B cell (primary cell): ENCODE measurements at regions of chr11 and their contacts with region 1.

Region 1: DNA sequence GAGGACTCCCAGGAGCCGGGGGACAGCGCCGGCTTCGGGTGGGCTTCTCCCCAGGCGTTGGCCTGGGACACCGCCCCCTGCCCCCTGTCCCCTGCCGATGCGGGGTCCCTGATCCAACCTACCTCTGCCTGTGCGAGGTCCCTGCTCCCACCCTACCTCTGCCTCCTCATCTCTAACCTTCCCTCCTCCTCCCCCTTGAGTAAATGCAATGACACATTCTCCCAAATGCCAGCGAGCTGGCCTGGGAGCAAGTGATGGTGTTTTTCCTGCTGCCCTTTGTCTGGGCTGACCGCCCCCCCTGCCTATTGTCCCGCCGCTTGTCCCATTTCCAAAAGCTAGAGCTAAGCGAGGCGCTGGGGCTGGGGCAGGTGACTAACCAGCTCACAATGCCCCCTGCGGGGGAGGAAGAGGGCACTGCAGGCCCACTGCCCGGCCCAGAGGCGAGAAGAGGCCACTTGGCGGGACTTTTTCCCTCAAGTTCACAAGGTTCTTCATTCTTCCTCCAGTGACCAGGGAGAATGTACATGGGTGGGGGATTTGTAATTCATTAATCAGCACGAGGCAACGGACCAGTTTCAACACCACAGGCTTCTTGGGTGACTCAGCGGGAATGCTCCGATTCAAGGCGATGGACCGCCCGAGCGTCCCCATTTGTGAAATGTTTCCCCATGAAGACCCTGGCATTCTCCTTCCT is 674 bp upstream of the CLCF1 start:
- DNase-seq: peak; percentile 77
- ATAC-seq: peak; percentile 35
- H3K4me3 ChIP-seq: peak overlapping the region in 4 of 5 experiments; percentile 48 to 95 (median 76)
- H3K4me3 Mint-ChIP-seq: peak overlapping the region; percentile 94
- H3K27ac ChIP-seq: peak overlapping the region; percentile 41 to 89
- H3K27ac Mint-ChIP-seq: peak overlapping the region; percentile 92
- H3K4me1 ChIP-seq: peaks cover 40 to 47% of the 10 kb centered on the region in 2 donors
- H3K4me1 Mint-ChIP-seq: peaks cover 50% of the 10 kb centered on the region
- H3K27me3 ChIP-seq: no peaks in the 10 kb centered on the region
- H3K27me3 Mint-ChIP-seq: no peaks in the 10 kb centered on the region
- CTCF ChIP-seq: peak; percentile 66

Region 2: DNA sequence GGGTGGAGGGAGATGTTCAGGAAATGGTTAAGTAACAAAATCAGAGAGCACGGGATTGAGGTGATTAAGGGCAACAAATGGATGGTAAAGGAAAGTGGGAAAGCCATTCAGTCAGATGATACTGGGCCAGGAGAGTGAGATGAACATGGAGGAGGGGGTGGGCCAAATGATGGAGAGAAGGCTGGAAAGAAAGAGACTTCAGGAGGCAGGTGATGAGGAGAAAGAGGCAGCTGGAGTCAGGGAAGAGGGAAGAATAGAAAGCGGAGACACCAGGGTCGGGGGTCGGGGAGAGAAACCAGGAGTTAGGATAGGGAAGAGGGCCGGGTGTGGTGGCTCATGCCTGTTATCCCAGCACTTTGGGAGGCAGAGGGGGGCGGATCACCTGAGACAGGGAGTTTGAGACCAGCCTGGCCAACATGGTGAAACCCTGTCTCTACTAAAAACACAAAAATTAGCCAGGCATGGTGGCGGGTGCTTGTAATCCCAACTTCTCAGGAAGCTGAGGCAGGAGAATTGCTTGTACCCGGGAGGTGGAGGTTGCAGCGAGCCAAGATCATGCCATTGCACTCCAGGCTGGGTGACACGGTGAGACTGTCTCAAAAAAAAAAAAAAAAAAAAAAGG is 259.7 kb before region 1 on chr11:
- CTCF ChIA-PET with region 1: no interaction called
- POLR2A ChIA-PET with region 1: no interaction called
- intact Hi-C with region 1: no loop called
- DNase-seq: no peak
- ATAC-seq: no peak
- H3K4me3 ChIP-seq: no peak overlapping the region
- H3K4me3 Mint-ChIP-seq: no peak overlapping the region
- H3K27ac ChIP-seq: no peak overlapping the region
- H3K27ac Mint-ChIP-seq: no peak overlapping the region
- H3K4me1 ChIP-seq: peaks cover 7 to 22% of the 10 kb centered on the region in 2 donors
- H3K4me1 Mint-ChIP-seq: peaks cover 21% of the 10 kb centered on the region
- H3K27me3 ChIP-seq: no peaks in the 10 kb centered on the region
- H3K27me3 Mint-ChIP-seq: no peaks in the 10 kb centered on the region
- CTCF ChIP-seq: no peak

Region 3: GRCh38 chr11:67277231-67277961 is 96.7 kb before region 1 on chr11:
- CTCF ChIA-PET with region 1: no interaction called
- POLR2A ChIA-PET with region 1: interaction called, 12 read pairs
- intact Hi-C with region 1: no loop called
- DNase-seq: peak; percentile 96
- ATAC-seq: peak; percentile 95
- H3K4me3 ChIP-seq: peak overlapping the region; percentile 35 to 59 (median 50)
- H3K4me3 Mint-ChIP-seq: peak overlapping the region; percentile 84
- H3K27ac ChIP-seq: peak overlapping the region; percentile 82
- H3K27ac Mint-ChIP-seq: peak overlapping the region; percentile 95
- H3K4me1 ChIP-seq: peaks cover 82 to 86% of the 10 kb centered on the region in 2 donors
- H3K4me1 Mint-ChIP-seq: peaks cover 76% of the 10 kb centered on the region
- H3K27me3 ChIP-seq: no peaks in the 10 kb centered on the region
- H3K27me3 Mint-ChIP-seq: no peaks in the 10 kb centered on the region
- CTCF ChIP-seq: no peak

Region 4: GRCh38 chr11:67295846-67296245 is 78.2 kb before region 1 on chr11:
- CTCF ChIA-PET with region 1: no interaction called
- POLR2A ChIA-PET with region 1: no interaction called
- intact Hi-C with region 1: no loop called
- DNase-seq: no peak
- ATAC-seq: no peak
- H3K4me3 ChIP-seq: no peak overlapping the region
- H3K4me3 Mint-ChIP-seq: no peak overlapping the region
- H3K27ac ChIP-seq: no peak overlapping the region
- H3K27ac Mint-ChIP-seq: no peak overlapping the region
- H3K4me1 ChIP-seq: peaks cover 6 to 8% of the 10 kb centered on the region in 2 donors
- H3K4me1 Mint-ChIP-seq: peaks cover 18% of the 10 kb centered on the region
- H3K27me3 ChIP-seq: no peaks in the 10 kb centered on the region
- H3K27me3 Mint-ChIP-seq: no peaks in the 10 kb centered on the region
- CTCF ChIP-seq: no peak

Region 5: DNA sequence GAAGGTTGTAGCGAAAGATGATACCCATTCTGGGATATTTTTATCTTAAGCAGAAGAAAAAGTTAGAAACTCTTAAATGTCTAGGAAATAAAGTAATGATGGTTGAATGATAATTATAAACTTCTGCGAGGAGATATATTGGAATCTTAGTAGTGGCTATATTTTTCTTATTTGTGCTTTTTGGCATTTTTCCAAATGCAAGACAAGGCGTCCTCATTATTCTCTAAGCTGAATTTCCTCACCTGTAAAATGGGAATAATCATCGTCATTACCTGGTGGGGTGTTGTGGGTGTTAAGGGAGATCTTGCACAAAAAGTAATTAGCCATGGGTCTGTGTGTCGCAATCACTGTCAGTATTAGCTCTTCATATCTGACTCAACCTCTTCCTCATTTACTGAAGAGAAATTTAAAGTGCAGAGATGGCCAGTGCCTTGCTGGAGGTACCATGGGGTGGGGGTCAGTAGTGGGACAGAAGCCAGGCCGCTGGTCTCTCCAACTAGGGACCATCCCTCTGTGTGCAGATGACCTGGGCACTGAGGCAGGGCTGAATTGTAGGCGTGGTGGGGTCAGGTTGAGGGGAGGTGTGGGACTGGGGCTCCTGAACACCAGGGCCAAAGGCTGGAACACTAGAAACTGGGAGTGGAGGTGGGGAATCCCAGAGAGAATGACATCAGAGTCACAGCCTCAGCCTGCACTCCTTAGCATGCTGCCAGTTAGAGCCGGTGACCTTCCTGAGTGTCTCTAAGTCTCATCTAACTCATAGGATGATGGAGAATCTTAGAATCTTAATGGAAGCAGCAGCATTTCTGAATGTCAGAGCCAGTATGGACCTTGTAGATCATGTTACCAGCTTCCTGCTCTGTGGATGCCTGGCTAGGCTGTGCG is 127.0 kb after region 1 on chr11:
- CTCF ChIA-PET with region 1: no interaction called
- POLR2A ChIA-PET with region 1: no interaction called
- intact Hi-C with region 1: no loop called
- DNase-seq: no peak
- ATAC-seq: no peak
- H3K4me3 ChIP-seq: no peak overlapping the region
- H3K4me3 Mint-ChIP-seq: no peak overlapping the region
- H3K27ac ChIP-seq: no peak overlapping the region
- H3K27ac Mint-ChIP-seq: no peak overlapping the region
- H3K4me1 ChIP-seq: peaks cover 18 to 25% of the 10 kb centered on the region in 2 donors
- H3K4me1 Mint-ChIP-seq: peaks cover 28% of the 10 kb centered on the region
- H3K27me3 ChIP-seq: no peaks in the 10 kb centered on the region
- H3K27me3 Mint-ChIP-seq: no peaks in the 10 kb centered on the region
- CTCF ChIP-seq: no peak

Region 6: DNA sequence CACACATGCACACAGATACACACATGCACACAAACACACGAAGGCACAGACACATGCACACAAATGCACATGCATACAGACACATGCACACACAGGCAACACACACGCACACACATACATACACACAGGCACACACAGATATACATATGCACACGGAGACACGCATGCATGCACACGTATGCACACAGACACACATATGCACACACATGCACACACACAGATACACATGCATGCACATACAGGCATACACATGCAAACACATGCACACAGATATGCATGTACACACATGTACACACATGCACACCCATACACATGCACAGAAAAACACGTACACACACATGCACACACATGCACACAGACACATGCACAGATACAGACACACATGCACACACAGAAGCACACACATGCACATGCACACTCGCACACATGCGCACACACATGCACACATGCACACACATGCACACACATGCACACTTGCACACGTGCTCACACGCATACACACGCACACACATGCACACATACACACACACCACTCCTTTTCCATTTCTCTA is 371.2 kb after region 1 on chr11:
- CTCF ChIA-PET with region 1: no interaction called
- POLR2A ChIA-PET with region 1: no interaction called
- intact Hi-C with region 1: no loop called
- DNase-seq: no peak
- ATAC-seq: no peak
- H3K4me3 ChIP-seq: no peak overlapping the region
- H3K4me3 Mint-ChIP-seq: no peak overlapping the region
- H3K27ac ChIP-seq: no peak overlapping the region
- H3K27ac Mint-ChIP-seq: no peak overlapping the region
- H3K4me1 ChIP-seq: peaks cover 0 to 4% of the 10 kb centered on the region in 2 donors
- H3K4me1 Mint-ChIP-seq: peaks cover 8% of the 10 kb centered on the region
- H3K27me3 ChIP-seq: no peaks in the 10 kb centered on the region
- H3K27me3 Mint-ChIP-seq: peaks cover 7% of the 10 kb centered on the region
- CTCF ChIP-seq: no peak